Gastrocnemius medialis (tissue), 4 donors: ENCODE measurements at regions of chr14 and their contacts with region 1.

Region 1: GRCh38 chr14:24215495-24216344 is at the start of gene MDP1:
- DNase-seq: peak; percentile 64 to 82
- ATAC-seq: peak; percentile 78 to 81
- H3K4me3 ChIP-seq: peak within 1 kb of the TSS; percentile 70 to 87 (median 76)
- H3K27ac ChIP-seq: peak within 1 kb of the TSS; percentile 83 to 94 (median 91)
- H3K4me1 ChIP-seq: peaks cover 28 to 29% of the 10 kb centered on the region in 2 donors
- H3K27me3 ChIP-seq: no peaks in the 10 kb centered on the region
- CTCF ChIP-seq: peak in 3 of 5 experiments; percentile 30 to 60 (median 45)
- POLR2A ChIP-seq: peak; percentile 68 to 84
- total RNA-seq, gene MDP1: 6.7 to 19.2 (median 13.9) TPM

Region 2: DNA sequence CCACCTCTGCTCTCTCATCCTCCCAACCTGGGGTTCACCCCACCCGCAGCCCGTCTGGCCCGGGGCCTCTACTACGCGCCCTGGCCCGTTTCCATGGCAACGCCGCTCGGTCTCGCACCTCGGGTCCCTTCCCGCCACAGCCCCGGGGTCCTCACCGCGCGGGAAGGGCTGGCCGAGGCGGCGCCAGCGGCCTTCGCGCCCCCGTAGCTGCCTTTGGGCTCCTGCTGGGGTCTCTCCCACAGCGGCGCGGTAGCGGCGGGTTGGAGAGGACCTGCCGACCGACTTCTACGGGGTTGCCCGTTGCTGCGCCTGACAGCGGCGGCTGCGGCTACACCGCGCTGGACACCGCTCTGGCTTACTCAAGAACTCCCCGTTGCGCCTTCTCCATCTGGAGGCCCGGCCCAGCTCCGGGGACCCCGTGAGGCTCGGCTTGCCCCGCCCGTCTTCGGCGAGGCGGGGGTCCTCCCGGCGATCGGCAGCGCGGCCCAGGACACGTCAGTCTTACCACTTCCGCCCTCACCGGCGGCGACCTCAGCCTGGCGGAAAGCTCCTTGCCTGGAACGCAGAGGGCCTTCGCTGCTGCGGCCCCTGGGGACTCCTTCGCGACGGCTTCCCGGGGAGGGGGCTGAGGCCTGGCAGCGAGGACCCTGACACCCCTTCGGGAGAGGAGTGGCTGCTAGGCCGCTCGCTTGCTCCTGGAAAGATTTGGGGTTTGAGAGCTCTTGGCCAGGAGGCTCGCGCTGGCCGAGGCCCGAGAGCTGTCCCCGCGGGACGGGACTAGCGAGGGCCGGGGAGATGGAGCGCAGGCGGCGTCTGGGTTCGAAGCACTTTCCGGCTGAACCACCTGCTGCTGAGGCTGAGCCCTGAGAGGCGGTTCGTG is 20.3 kb before region 1 on chr14 and contains the start of gene TM9SF1:
- in situ Hi-C with region 1: no loop called
- intact Hi-C with region 1: loop called (anchors 2 kb)
- DNase-seq: peak; percentile 65 to 82
- ATAC-seq: peak; percentile 95 to 97
- H3K4me3 ChIP-seq: peak within 1 kb of the TSS; percentile 84 to 100 (median 93)
- H3K27ac ChIP-seq: peak within 1 kb of the TSS; percentile 93 to 96 (median 95)
- H3K4me1 ChIP-seq: peaks cover 21% of the 10 kb centered on the region in 2 donors
- H3K27me3 ChIP-seq: no peaks in the 10 kb centered on the region
- CTCF ChIP-seq: peak in 1 of 5 experiments; percentile 24
- POLR2A ChIP-seq: peak; percentile 55 to 73
- total RNA-seq, gene TM9SF1: 31.4 to 46.4 (median 36.7) TPM

Region 3: GRCh38 chr14:24463017-24463883 is 247.5 kb after region 1 on chr14:
- in situ Hi-C with region 1: no loop called
- intact Hi-C with region 1: no loop called
- DNase-seq: no peak
- ATAC-seq: no peak
- H3K4me3 ChIP-seq: no peak overlapping the region
- H3K27ac ChIP-seq: no peak overlapping the region
- H3K4me1 ChIP-seq: no peaks in the 10 kb centered on the region
- H3K27me3 ChIP-seq: no peaks in the 10 kb centered on the region
- CTCF ChIP-seq: no peak
- POLR2A ChIP-seq: no peak